ENCODE measurements at regions of chr1 and their contacts with region 1.

Region 1: GRCh38 chr1:155978325-155978972 is at the start of gene ARHGEF2:
- DNase-seq: no peak
- ATAC-seq: peak; percentile 78
- H3K4me3 ChIP-seq: peak within 1 kb of the TSS; percentile 100
- H3K27ac ChIP-seq: peak within 1 kb of the TSS; percentile 97
- H3K4me1 ChIP-seq: peaks cover 28% of the 10 kb centered on the region
- H3K27me3 ChIP-seq: no peaks in the 10 kb centered on the region
- CTCF ChIP-seq: peak in 2 of 3 experiments; percentile 19 to 27; a peak in 4 of 6 replicates
- EP300 ChIP-seq: no peak
- POLR2A ChIP-seq: peak; percentile 91
- RAD21 ChIP-seq: no peak
- polyA plus RNA-seq, gene ARHGEF2: 8.1 to 10.6 TPM

Region 2: GRCh38 chr1:155946633-155947219 is 31.7 kb before region 1 on chr1:
- CTCF ChIA-PET with region 1: interaction called, 38 read pairs
- POLR2A ChIA-PET with region 1: interaction called, 273 read pairs
- RAD21 ChIA-PET with region 1: interaction called, 214 read pairs
- SMC1A ChIA-PET with region 1: interaction called, 133 read pairs
- in situ Hi-C with region 1: no loop called
- intact Hi-C with region 1: loop called (anchors 2 kb)
- DNase-seq: no peak
- ATAC-seq: peak; percentile 49
- H3K4me3 ChIP-seq: peak overlapping the region; percentile 12
- H3K27ac ChIP-seq: peak overlapping the region; percentile 79
- H3K4me1 ChIP-seq: peaks cover 50% of the 10 kb centered on the region
- H3K27me3 ChIP-seq: no peaks in the 10 kb centered on the region
- CTCF ChIP-seq: no peak
- EP300 ChIP-seq: no peak; a peak in 1 of 4 replicates
- POLR2A ChIP-seq: no peak
- RAD21 ChIP-seq: no peak

Region 3: DNA sequence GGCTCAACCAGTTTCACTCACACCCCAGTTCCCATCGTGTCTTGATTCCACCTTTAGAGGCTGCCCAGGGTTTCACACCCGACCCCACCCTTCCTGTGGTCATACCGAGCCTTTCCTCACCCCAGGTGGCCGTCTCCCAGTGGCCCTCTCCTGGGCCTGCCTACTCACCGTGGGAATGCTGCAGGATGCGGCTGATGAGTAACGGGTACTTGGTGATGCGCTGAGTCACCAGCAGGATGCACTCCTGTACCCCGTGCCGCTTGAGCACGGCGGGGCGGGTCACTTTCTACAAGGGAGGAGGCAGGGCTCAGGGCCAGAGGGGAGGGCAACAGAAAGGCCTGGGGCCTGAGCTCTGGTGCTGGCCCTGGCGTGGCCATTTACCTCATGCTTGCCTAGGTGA is 16.5 kb before region 1 on chr1:
- CTCF ChIA-PET with region 1: interaction called, 54 read pairs
- POLR2A ChIA-PET with region 1: interaction called, 180 read pairs
- RAD21 ChIA-PET with region 1: interaction called, 72 read pairs
- SMC1A ChIA-PET with region 1: interaction called, 152 read pairs
- in situ Hi-C with region 1: no loop called
- intact Hi-C with region 1: loop called (anchors 2 kb)
- DNase-seq: no peak
- ATAC-seq: 0 out of 3 replicates have a peak, but pooled peaks have one; percentile 5
- H3K4me3 ChIP-seq: no peak overlapping the region
- H3K27ac ChIP-seq: no peak overlapping the region; the same call in 1 of the 2 replicates
- H3K4me1 ChIP-seq: peaks cover 39% of the 10 kb centered on the region
- H3K27me3 ChIP-seq: no peaks in the 10 kb centered on the region
- CTCF ChIP-seq: peak in 1 of 3 experiments; percentile 9; a peak in 1 of 6 replicates
- EP300 ChIP-seq: no peak
- POLR2A ChIP-seq: peak; percentile 57; the same call in 1 of the 2 replicates
- RAD21 ChIP-seq: peak; percentile 39

Region 4: GRCh38 chr1:156054500-156055280 is 76.2 kb after region 1 on chr1 and contains the start of gene LAMTOR2:
- CTCF ChIA-PET with region 1: interaction called, 3 read pairs
- POLR2A ChIA-PET with region 1: interaction called, 3 read pairs
- RAD21 ChIA-PET with region 1: no interaction called
- SMC1A ChIA-PET with region 1: no interaction called
- in situ Hi-C with region 1: no loop called
- intact Hi-C with region 1: loop called (anchors 5 kb)
- DNase-seq: peak; percentile 83
- ATAC-seq: peak; percentile 84
- H3K4me3 ChIP-seq: peak within 1 kb of the TSS; percentile 93
- H3K27ac ChIP-seq: peak within 1 kb of the TSS; percentile 95
- H3K4me1 ChIP-seq: no peaks in the 10 kb centered on the region; the same call in 1 of the 2 replicates
- H3K27me3 ChIP-seq: no peaks in the 10 kb centered on the region
- CTCF ChIP-seq: no peak
- EP300 ChIP-seq: no peak
- POLR2A ChIP-seq: peak; percentile 73; the same call in 1 of the 2 replicates
- RAD21 ChIP-seq: no peak
- polyA plus RNA-seq, gene LAMTOR2: 225 to 264 TPM

Region 5: DNA sequence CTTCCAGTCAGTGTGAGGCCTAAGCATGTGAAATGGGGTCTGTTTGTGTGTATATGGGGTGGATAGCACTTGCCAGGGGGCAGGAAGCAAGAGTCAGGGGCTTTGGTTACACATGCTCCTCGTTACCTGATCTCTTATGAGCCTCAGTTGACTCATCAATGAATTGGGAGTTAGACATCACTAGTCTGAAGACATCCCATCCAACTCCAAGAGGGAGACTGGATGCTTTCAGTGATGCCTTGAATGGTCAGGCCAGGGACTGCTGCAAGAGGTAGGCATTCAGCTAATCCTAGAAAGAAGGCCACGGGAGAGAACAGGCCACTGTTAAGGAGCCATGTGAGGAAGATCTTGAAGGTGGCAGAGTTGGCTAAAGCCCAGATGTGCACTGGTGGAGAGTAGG is 88.8 kb after region 1 on chr1:
- CTCF ChIA-PET with region 1: interaction called, 13 read pairs
- POLR2A ChIA-PET with region 1: interaction called, 7 read pairs
- RAD21 ChIA-PET with region 1: interaction called, 38 read pairs
- SMC1A ChIA-PET with region 1: interaction called, 9 read pairs
- in situ Hi-C with region 1: no loop called
- intact Hi-C with region 1: no loop called
- DNase-seq: no peak
- ATAC-seq: no peak
- H3K4me3 ChIP-seq: no peak overlapping the region
- H3K27ac ChIP-seq: no peak overlapping the region
- H3K4me1 ChIP-seq: no peaks in the 10 kb centered on the region
- H3K27me3 ChIP-seq: no peaks in the 10 kb centered on the region
- CTCF ChIP-seq: no peak
- EP300 ChIP-seq: no peak
- POLR2A ChIP-seq: no peak
- RAD21 ChIP-seq: no peak

Region 6: GRCh38 chr1:156090138-156090821 is 111.8 kb after region 1 on chr1:
- CTCF ChIA-PET with region 1: no interaction called
- POLR2A ChIA-PET with region 1: no interaction called
- RAD21 ChIA-PET with region 1: no interaction called
- SMC1A ChIA-PET with region 1: no interaction called
- in situ Hi-C with region 1: no loop called
- intact Hi-C with region 1: no loop called
- DNase-seq: no peak
- ATAC-seq: peak; percentile 54
- H3K4me3 ChIP-seq: no peak overlapping the region
- H3K27ac ChIP-seq: no peak overlapping the region
- H3K4me1 ChIP-seq: peaks cover under 1% of the 10 kb centered on the region; the same call in 1 of the 2 replicates
- H3K27me3 ChIP-seq: no peaks in the 10 kb centered on the region
- CTCF ChIP-seq: no peak
- EP300 ChIP-seq: no peak
- POLR2A ChIP-seq: no peak
- RAD21 ChIP-seq: no peak